ENCODE measurements at regions of chr4 and their contacts with region 1.

Region 1: GRCh38 chr4:56261027-56261426 is 126.3 kb downstream of the AASDH start:
- DNase-seq: peak; percentile 81
- H3K4me3 Mint-ChIP-seq: peak overlapping the region; percentile 15
- H3K27ac Mint-ChIP-seq: peak overlapping the region; percentile 37
- H3K4me1 Mint-ChIP-seq: peaks cover 17% of the 10 kb centered on the region
- H3K27me3 Mint-ChIP-seq: peaks cover 34% of the 10 kb centered on the region

Region 2: GRCh38 chr4:55920571-55920970 is 340.5 kb before region 1 on chr4:
- intact Hi-C with region 1: no loop called
- DNase-seq: no peak
- H3K4me3 Mint-ChIP-seq: no peak overlapping the region
- H3K27ac Mint-ChIP-seq: no peak overlapping the region
- H3K4me1 Mint-ChIP-seq: no peaks in the 10 kb centered on the region
- H3K27me3 Mint-ChIP-seq: no peaks in the 10 kb centered on the region

Region 3: GRCh38 chr4:55993994-55994663 is 266.9 kb before region 1 on chr4:
- intact Hi-C with region 1: loop called (anchors 1 kb)
- DNase-seq: peak; percentile 64
- H3K4me3 Mint-ChIP-seq: peak overlapping the region; percentile 35
- H3K27ac Mint-ChIP-seq: peak overlapping the region; percentile 62
- H3K4me1 Mint-ChIP-seq: peaks cover 25% of the 10 kb centered on the region
- H3K27me3 Mint-ChIP-seq: no peaks in the 10 kb centered on the region

Region 4: DNA sequence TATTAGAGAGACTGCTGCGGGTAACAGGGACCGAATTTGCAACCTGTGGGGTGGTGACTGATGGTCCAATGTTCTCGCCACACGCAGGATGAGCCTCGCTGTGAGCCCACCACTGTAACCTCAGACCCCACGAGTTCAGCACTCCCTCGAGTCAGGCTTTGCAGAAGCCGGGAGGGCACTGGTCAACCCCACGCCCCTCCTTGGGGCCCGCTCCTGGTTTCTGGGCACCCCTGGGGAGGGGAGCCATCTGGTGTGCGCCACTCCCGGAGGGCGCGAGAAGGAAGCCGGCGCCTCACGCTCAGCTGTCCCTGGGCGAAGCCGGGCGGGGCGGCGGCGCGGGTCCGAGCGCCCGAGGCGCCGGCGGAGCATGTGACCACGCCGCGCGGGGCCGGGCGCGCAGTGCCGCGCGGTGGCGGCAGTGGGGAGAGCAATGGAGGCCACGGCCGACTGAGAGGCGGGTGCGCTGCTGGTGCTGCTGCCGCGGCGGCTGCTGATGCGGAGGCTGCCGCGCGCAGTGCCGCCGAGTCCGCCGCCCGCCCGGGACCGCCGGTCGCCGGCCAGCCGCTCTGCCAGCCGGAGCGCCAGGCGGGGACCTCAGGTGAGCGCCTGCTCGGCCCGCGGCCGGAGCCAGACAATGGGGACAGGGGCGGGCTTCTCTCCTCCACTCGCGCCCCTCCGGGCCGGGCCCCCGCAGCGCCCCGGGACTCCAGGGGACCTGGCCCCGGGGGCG is 212.2 kb before region 1 on chr4:
- intact Hi-C with region 1: loop called (anchors 2 kb)
- DNase-seq: peak; percentile 89
- H3K4me3 Mint-ChIP-seq: peak overlapping the region; percentile 80
- H3K27ac Mint-ChIP-seq: no peak overlapping the region
- H3K4me1 Mint-ChIP-seq: peaks cover 13% of the 10 kb centered on the region
- H3K27me3 Mint-ChIP-seq: peaks cover 54% of the 10 kb centered on the region

Region 5: DNA sequence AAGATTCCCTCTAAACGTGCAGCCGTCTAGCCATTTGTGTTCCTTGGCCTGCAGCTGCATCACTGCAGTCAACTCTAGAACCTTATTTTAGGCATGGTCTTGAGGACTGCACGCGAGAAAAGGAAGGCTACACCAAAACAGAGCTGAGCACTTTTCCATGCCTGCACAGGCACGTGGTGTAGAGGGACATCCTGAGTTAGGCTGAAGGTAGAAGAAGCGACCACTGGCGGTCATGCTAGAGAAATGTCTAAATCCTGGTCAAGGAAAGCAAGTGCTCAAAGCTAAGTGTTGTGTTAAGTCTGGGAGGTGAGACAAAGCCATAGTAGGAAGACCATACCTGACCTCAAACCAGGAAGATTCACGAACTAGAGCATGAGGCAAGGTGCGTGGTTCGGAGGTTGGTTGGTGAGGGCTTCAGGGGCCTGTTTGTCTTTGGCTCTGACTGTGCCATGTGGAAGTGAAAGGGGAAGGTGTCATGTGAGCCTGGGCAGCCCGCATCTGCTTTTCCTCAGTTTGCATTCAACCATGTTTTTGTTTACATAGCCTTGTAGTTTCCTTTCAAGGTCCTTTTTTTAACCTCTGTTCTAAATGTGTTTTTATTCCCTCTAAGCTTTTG is 77.6 kb before region 1 on chr4:
- intact Hi-C with region 1: loop called (anchors 5 kb)
- DNase-seq: no peak
- H3K4me3 Mint-ChIP-seq: no peak overlapping the region
- H3K27ac Mint-ChIP-seq: no peak overlapping the region
- H3K4me1 Mint-ChIP-seq: peaks cover 27% of the 10 kb centered on the region
- H3K27me3 Mint-ChIP-seq: no peaks in the 10 kb centered on the region

Measured in activated CD4-positive, alpha-beta T cell treated with anti-CD3 and anti-CD28 coated beads, Interleukin-2, amount 10 ng/mL, durations not matched to agents 24 days and 14 days (primary cell).